K562 (cell line): ENCODE measurements at regions of chr5 and their contacts with region 1.

Region 1: GRCh38 chr5:137220523-137220927 is 278.6 kb downstream of the SPOCK1 start:
- DNase-seq: peak; percentile 19 to 69 (median 44)
- ATAC-seq: peak; percentile 100
- H3K4me3 ChIP-seq: no peak overlapping the region
- H3K27ac ChIP-seq: no peak overlapping the region
- H3K4me1 ChIP-seq: no peaks in the 10 kb centered on the region; a peak in 1 of 5 replicates
- H3K27me3 ChIP-seq: peaks cover 0 to 2% of the 10 kb centered on the region in 2 experiments; a peak in 2 of 5 replicates
- CTCF ChIP-seq: peak; percentile 50 to 65 (median 65)
- EP300 ChIP-seq: peak; percentile 12; the same call in 1 of the 2 replicates
- POLR2A ChIP-seq: no peak
- RAD21 ChIP-seq: peak in 1 of 2 experiments; percentile 53; a peak in 2 of 4 replicates

Region 2: DNA sequence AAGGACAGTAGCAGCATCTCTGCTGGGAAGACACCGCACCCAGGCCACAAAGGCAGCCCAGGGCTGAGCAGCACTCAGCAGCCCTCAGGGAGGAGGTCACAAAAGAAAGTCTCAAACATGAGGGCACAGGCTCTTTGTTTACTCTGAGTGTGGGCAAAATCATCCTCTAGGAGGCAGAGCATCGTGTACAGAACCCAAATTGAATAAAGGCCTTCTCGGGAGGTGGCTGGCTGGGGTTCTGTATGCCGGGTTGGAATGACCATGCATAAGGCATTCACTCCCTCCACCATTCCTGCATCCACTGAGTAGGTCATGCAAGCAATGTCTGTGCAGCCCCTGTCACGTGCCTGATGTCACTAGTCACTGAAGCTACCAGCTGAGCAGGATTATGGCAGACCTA is 134.2 kb before region 1 on chr5:
- CTCF ChIA-PET with region 1: no interaction called
- POLR2A ChIA-PET with region 1: no interaction called
- in situ Hi-C with region 1: no loop called
- intact Hi-C with region 1: loop called (anchors 10 kb)
- DNase-seq: no peak
- ATAC-seq: no peak; the same call in 2 of the 3 replicates
- H3K4me3 ChIP-seq: no peak overlapping the region
- H3K27ac ChIP-seq: no peak overlapping the region
- H3K4me1 ChIP-seq: no peaks in the 10 kb centered on the region
- H3K27me3 ChIP-seq: no peaks in the 10 kb centered on the region; a peak in 1 of 5 replicates
- CTCF ChIP-seq: 0 out of 6 replicates have a peak, but pooled peaks of 1 of the 3 experiments have one; percentile 10
- EP300 ChIP-seq: no peak
- POLR2A ChIP-seq: no peak
- RAD21 ChIP-seq: no peak